PC-9 (cell line): ENCODE measurements at regions of chr12 and their contacts with region 1.

Region 1: GRCh38 chr12:56224102-56224701 is at the start of gene NABP2:
- DNase-seq: peak; percentile 92 to 98
- H3K4me3 ChIP-seq: peak within 1 kb of the TSS; percentile 91
- H3K27ac ChIP-seq: no peak within 1 kb of the TSS
- H3K4me1 ChIP-seq: peaks cover 27% of the 10 kb centered on the region
- H3K27me3 ChIP-seq: no peaks in the 10 kb centered on the region
- CTCF ChIP-seq: peak; percentile 81
- total RNA-seq, gene NABP2: 58.2 and 68.5 TPM in 2 replicates

Region 2: GRCh38 chr12:55829967-55830600 is 394.1 kb before region 1 on chr12:
- CTCF ChIA-PET with region 1: no interaction called
- POLR2A ChIA-PET with region 1: no interaction called
- intact Hi-C with region 1: no loop called
- DNase-seq: peak in 1 of 2 experiments; percentile 27
- H3K4me3 ChIP-seq: peak overlapping the region; percentile 96
- H3K27ac ChIP-seq: peak overlapping the region; percentile 36
- H3K4me1 ChIP-seq: peaks cover 39% of the 10 kb centered on the region
- H3K27me3 ChIP-seq: no peaks in the 10 kb centered on the region
- CTCF ChIP-seq: no peak

Region 3: DNA sequence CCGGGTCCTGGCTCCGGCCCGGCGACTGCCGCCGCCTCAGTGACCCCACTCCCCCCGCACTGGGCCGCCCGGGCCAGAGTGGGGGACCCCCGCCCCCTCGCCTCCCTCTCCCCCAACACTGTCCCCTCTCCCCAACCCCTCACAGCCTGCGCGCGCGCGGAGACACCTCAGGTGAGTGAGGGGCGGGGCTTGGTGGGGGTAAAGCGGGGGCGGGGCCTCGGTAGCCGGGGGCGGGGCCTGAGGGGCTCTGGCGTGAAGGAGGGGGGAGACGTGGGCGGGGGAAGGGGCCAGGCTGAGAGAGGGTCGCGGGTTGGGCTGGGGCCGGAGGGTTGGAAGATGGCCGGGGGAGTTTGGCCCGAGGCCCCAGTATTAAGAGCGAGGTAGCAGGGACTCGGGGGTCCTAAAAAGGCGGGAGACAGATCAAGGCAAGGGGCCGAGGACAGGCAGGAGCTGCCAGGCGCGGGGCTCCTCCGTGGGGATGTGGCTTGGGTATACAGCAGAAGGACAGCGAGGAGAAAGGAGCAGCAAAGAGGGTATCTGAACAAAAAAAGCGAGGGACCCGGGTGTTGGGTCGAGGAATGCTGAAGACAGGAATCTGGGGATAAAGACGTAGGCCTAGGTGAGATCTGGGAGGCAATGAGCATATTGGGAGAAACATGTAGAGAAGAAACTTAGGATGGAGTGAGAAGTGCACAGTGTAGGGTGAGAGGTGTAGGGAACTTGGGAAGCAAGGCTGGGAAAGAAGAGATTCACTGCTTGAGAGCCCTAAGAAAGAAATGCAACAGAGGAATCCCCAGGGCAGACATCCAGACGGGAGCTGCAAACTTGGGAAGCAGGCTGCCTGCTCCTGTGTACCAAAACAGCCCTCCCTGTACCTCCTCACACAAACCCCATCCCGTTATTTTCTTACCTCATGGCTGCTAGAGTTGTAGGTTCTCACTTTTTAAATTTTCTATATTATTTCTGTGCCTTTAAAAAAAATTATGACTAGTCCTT is 216.3 kb before region 1 on chr12:
- CTCF ChIA-PET with region 1: no interaction called
- POLR2A ChIA-PET with region 1: interaction called, 15 read pairs
- intact Hi-C with region 1: no loop called
- DNase-seq: peak in 1 of 2 experiments; percentile 65
- H3K4me3 ChIP-seq: peak overlapping the region; percentile 63
- H3K27ac ChIP-seq: peak overlapping the region; percentile 52; the same call in 1 of the 2 replicates
- H3K4me1 ChIP-seq: peaks cover 13% of the 10 kb centered on the region
- H3K27me3 ChIP-seq: no peaks in the 10 kb centered on the region
- CTCF ChIP-seq: no peak

Region 4: GRCh38 chr12:56189176-56189917 is 34.9 kb before region 1 on chr12 and contains the start of gene SMARCC2:
- CTCF ChIA-PET with region 1: interaction called, 14 read pairs
- POLR2A ChIA-PET with region 1: interaction called, 3 read pairs
- intact Hi-C with region 1: loop called (anchors 1 kb)
- DNase-seq: peak; percentile 71 to 91
- H3K4me3 ChIP-seq: peak within 1 kb of the TSS; percentile 99
- H3K27ac ChIP-seq: peak within 1 kb of the TSS; percentile 85
- H3K4me1 ChIP-seq: peaks cover 28% of the 10 kb centered on the region
- H3K27me3 ChIP-seq: no peaks in the 10 kb centered on the region
- CTCF ChIP-seq: peak; percentile 68
- total RNA-seq, gene SMARCC2: 70.3 and 86.4 TPM in 2 replicates

Region 5: DNA sequence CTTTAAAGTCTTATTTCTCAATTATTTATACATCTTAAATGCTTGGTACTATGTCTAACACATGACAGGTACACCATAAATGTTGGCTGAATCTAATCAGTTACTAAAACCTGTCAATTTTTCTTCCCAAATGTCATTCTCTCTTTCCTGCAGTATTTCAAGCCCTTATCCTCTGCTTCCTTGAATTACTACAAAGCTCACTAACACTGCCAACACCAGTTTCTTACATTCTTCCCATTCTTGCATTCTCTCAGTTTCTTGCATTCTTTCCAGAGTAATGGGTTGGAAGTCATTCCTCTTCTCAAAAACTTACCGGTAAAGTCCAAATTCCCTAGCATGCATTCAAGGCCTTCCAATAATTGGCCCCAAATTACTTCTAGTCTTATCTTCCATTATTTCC is 25.4 kb before region 1 on chr12:
- CTCF ChIA-PET with region 1: interaction called, 3 read pairs
- POLR2A ChIA-PET with region 1: interaction called, 5 read pairs
- intact Hi-C with region 1: loop called (anchors 1 kb)
- DNase-seq: no peak
- H3K4me3 ChIP-seq: no peak overlapping the region
- H3K27ac ChIP-seq: no peak overlapping the region
- H3K4me1 ChIP-seq: no peaks in the 10 kb centered on the region
- H3K27me3 ChIP-seq: no peaks in the 10 kb centered on the region
- CTCF ChIP-seq: no peak

Region 6: GRCh38 chr12:56266693-56267442 is 42.7 kb after region 1 on chr12 and contains the start of gene COQ10A:
- CTCF ChIA-PET with region 1: no interaction called
- POLR2A ChIA-PET with region 1: interaction called, 5 read pairs
- intact Hi-C with region 1: loop called (anchors 2 kb)
- DNase-seq: peak; percentile 57 to 85
- H3K4me3 ChIP-seq: peak within 1 kb of the TSS; percentile 75
- H3K27ac ChIP-seq: no peak within 1 kb of the TSS
- H3K4me1 ChIP-seq: peaks cover 15% of the 10 kb centered on the region
- H3K27me3 ChIP-seq: no peaks in the 10 kb centered on the region
- CTCF ChIP-seq: peak; percentile 73
- total RNA-seq, gene COQ10A: 6.5 and 6.9 TPM in 2 replicates

Region 7: DNA sequence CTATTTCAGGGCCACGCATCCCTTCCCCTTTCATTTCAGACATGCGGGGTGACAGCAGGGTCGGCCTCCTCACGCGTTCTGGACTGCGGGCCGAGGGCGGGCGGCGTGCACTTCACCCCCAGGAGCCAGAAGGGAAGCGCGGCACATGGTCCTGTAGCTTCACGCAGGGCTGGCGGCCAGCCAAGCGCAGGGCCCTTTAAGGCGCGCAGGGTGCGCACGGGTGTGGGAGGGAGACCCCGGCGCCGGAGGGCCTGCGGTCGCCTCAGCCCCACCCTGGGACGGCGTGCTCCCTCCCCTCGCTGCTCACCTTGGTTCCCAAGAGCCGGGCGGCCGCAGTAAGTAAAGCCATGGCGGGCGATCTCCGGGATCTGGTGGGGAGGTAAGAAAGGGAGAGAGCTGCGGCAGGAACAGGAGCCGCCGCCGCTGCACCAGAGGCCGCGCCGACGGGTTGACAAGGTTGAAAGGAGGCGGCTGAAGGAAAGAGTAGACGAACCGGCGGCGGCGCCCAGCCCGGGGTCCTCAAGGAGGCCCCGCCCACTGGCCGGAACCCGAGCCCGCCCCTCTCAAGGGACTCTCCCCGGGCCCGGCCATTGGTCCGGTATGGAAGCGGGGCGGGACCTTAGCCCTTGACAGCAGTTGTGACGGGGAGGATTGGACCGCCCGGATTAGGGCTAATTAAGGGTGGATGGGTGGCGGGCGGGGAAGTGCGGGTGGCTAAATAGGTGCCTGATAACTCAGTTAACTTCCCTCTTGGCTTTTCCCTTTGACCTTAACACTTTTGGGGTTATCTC is 75.8 kb after region 1 on chr12 and contains the start of gene CS:
- CTCF ChIA-PET with region 1: no interaction called
- POLR2A ChIA-PET with region 1: no interaction called
- intact Hi-C with region 1: loop called (anchors 1 kb)
- DNase-seq: peak; percentile 93 to 97
- H3K4me3 ChIP-seq: peak within 1 kb of the TSS; percentile 88
- H3K27ac ChIP-seq: peak within 1 kb of the TSS; percentile 31
- H3K4me1 ChIP-seq: peaks cover 33% of the 10 kb centered on the region
- H3K27me3 ChIP-seq: no peaks in the 10 kb centered on the region
- CTCF ChIP-seq: no peak
- total RNA-seq, gene CS: 203 and 205 TPM in 2 replicates